ENCODE measurements at regions of chr19 and their contacts with region 1.

Region 1: GRCh38 chr19:35495107-35496064 is 5.1 kb upstream of the KRTDAP start:
- DNase-seq: no peak
- ATAC-seq: peak; percentile 98
- H3K4me3 ChIP-seq: no peak overlapping the region
- H3K27ac ChIP-seq: no peak overlapping the region
- H3K4me1 ChIP-seq: peaks cover 9% of the 10 kb centered on the region
- H3K27me3 ChIP-seq: peaks cover 0 to 2% of the 10 kb centered on the region in 2 experiments; a peak in 1 of 4 replicates
- CTCF ChIP-seq: peak; percentile 96 to 100 (median 98)
- EP300 ChIP-seq: no peak
- POLR2A ChIP-seq: no peak
- RAD21 ChIP-seq: peak; percentile 88

Region 2: GRCh38 chr19:35228177-35228930 is 267.0 kb before region 1 on chr19 and contains the start of gene FAM187B:
- CTCF ChIA-PET with region 1: no interaction called
- POLR2A ChIA-PET with region 1: no interaction called
- RAD21 ChIA-PET with region 1: no interaction called
- SMC1A ChIA-PET with region 1: no interaction called
- in situ Hi-C with region 1: no loop called
- intact Hi-C with region 1: no loop called
- DNase-seq: no peak
- ATAC-seq: no peak
- H3K4me3 ChIP-seq: no peak within 1 kb of the TSS
- H3K27ac ChIP-seq: no peak within 1 kb of the TSS
- H3K4me1 ChIP-seq: no peaks in the 10 kb centered on the region
- H3K27me3 ChIP-seq: 0 out of 4 replicates have a peak, but pooled peaks cover 0 to 2% of the 10 kb centered on the region in 2 experiments
- CTCF ChIP-seq: no peak
- EP300 ChIP-seq: no peak
- POLR2A ChIP-seq: no peak
- RAD21 ChIP-seq: no peak
- polyA plus RNA-seq, gene FAM187B: not detected

Region 3: DNA sequence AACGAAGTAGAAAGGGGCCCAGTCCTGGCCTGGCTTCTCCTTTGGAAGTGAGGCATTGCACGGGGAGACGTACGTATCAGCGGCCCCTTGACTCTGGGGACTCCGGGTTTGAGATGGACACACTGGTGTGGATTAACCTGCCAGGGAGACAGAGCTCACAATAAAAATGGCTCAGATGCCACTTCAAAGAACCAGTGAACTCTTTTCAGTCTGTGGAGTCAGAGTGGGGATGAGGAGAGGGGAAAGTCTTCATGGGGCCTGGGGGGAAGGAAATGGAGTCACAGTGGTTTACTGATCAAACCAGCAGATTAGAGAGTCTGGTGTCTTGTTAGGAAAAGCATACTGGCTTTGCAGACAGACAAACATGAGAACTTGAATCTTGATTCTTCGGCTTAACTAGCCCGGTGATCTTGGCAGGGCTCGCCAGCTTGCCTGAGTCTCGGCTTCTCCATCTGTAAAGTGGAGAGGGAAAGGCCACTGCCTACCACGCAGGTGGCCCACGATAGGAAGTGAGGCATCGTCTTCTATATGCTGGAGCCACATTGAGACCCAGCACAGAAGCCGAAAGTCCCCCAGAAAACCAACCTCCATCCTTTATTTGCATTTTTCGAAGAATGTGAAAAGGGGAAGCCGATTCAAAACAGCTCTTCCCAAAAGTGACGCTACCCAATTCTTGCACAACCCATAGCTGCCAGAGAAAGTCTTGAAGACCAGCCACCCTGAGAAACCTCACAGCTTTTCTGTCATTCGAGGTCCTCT is 148.0 kb before region 1 on chr19 and contains the start of gene FFAR1:
- CTCF ChIA-PET with region 1: interaction called, 111 read pairs
- POLR2A ChIA-PET with region 1: interaction called, 11 read pairs
- RAD21 ChIA-PET with region 1: interaction called, 41 read pairs
- SMC1A ChIA-PET with region 1: interaction called, 44 read pairs
- in situ Hi-C with region 1: no loop called
- intact Hi-C with region 1: loop called (anchors 1 kb)
- DNase-seq: peak; percentile 96
- ATAC-seq: peak; percentile 74
- H3K4me3 ChIP-seq: no peak within 1 kb of the TSS; the same call in 1 of the 2 replicates
- H3K27ac ChIP-seq: peak within 1 kb of the TSS; percentile 97
- H3K4me1 ChIP-seq: peaks cover 56% of the 10 kb centered on the region
- H3K27me3 ChIP-seq: no peaks in the 10 kb centered on the region
- CTCF ChIP-seq: no peak
- EP300 ChIP-seq: peak in 1 of 2 experiments; percentile 66; a peak in 2 of 4 replicates
- POLR2A ChIP-seq: peak; percentile 72
- RAD21 ChIP-seq: no peak
- polyA plus RNA-seq, gene FFAR1: 0.05 to 0.07 TPM

Region 4: GRCh38 chr19:35375505-35376307 is 119.7 kb before region 1 on chr19:
- CTCF ChIA-PET with region 1: interaction called, 10 read pairs
- POLR2A ChIA-PET with region 1: no interaction called
- RAD21 ChIA-PET with region 1: interaction called, 4 read pairs
- SMC1A ChIA-PET with region 1: interaction called, 3 read pairs
- in situ Hi-C with region 1: no loop called
- intact Hi-C with region 1: no loop called
- DNase-seq: no peak
- ATAC-seq: peak; percentile 36; the same call in 2 of the 3 replicates
- H3K4me3 ChIP-seq: no peak overlapping the region
- H3K27ac ChIP-seq: peak overlapping the region; percentile 51; the same call in 1 of the 2 replicates
- H3K4me1 ChIP-seq: peaks cover 31% of the 10 kb centered on the region
- H3K27me3 ChIP-seq: no peaks in the 10 kb centered on the region
- CTCF ChIP-seq: no peak
- EP300 ChIP-seq: no peak
- POLR2A ChIP-seq: no peak
- RAD21 ChIP-seq: no peak

Region 5: GRCh38 chr19:35462476-35462953 is 32.9 kb before region 1 on chr19:
- CTCF ChIA-PET with region 1: interaction called, 56 read pairs
- POLR2A ChIA-PET with region 1: interaction called, 4 read pairs
- RAD21 ChIA-PET with region 1: interaction called, 13 read pairs
- SMC1A ChIA-PET with region 1: interaction called, 29 read pairs
- in situ Hi-C with region 1: no loop called
- intact Hi-C with region 1: no loop called
- DNase-seq: peak; percentile 96
- ATAC-seq: peak; percentile 79
- H3K4me3 ChIP-seq: peak overlapping the region; percentile 33; the same call in 1 of the 2 replicates
- H3K27ac ChIP-seq: peak overlapping the region; percentile 73
- H3K4me1 ChIP-seq: peaks cover 56% of the 10 kb centered on the region
- H3K27me3 ChIP-seq: no peaks in the 10 kb centered on the region
- CTCF ChIP-seq: peak in 1 of 3 experiments; percentile 42; a peak in 2 of 6 replicates
- EP300 ChIP-seq: peak; percentile 92 to 97
- POLR2A ChIP-seq: no peak
- RAD21 ChIP-seq: peak; percentile 65

Region 6: GRCh38 chr19:35476149-35476548 is 19.2 kb before region 1 on chr19:
- CTCF ChIA-PET with region 1: interaction called, 56 read pairs
- POLR2A ChIA-PET with region 1: interaction called, 3 read pairs
- RAD21 ChIA-PET with region 1: interaction called, 10 read pairs
- SMC1A ChIA-PET with region 1: interaction called, 8 read pairs
- in situ Hi-C with region 1: no loop called
- intact Hi-C with region 1: no loop called
- DNase-seq: no peak
- ATAC-seq: no peak
- H3K4me3 ChIP-seq: no peak overlapping the region
- H3K27ac ChIP-seq: no peak overlapping the region
- H3K4me1 ChIP-seq: no peaks in the 10 kb centered on the region
- H3K27me3 ChIP-seq: no peaks in the 10 kb centered on the region
- CTCF ChIP-seq: peak in 2 of 3 experiments; percentile 30 to 32; a peak in 3 of 6 replicates
- EP300 ChIP-seq: no peak
- POLR2A ChIP-seq: no peak
- RAD21 ChIP-seq: no peak

Region 7: GRCh38 chr19:35509861-35510625 is 14.7 kb after region 1 on chr19:
- CTCF ChIA-PET with region 1: interaction called, 87 read pairs
- POLR2A ChIA-PET with region 1: interaction called, 9 read pairs
- RAD21 ChIA-PET with region 1: interaction called, 16 read pairs
- SMC1A ChIA-PET with region 1: interaction called, 35 read pairs
- in situ Hi-C with region 1: no loop called
- intact Hi-C with region 1: no loop called
- DNase-seq: no peak
- ATAC-seq: peak; percentile 88
- H3K4me3 ChIP-seq: peak overlapping the region; percentile 74
- H3K27ac ChIP-seq: peak overlapping the region; percentile 52
- H3K4me1 ChIP-seq: peaks cover 8% of the 10 kb centered on the region
- H3K27me3 ChIP-seq: no peaks in the 10 kb centered on the region; a peak in 1 of 4 replicates
- CTCF ChIP-seq: peak; percentile 96; a peak in 5 of 6 replicates
- EP300 ChIP-seq: no peak
- POLR2A ChIP-seq: no peak; the same call in 1 of the 2 replicates
- RAD21 ChIP-seq: peak; percentile 71

Region 8: GRCh38 chr19:35533201-35533821 is 37.9 kb after region 1 on chr19 and contains the start of gene GAPDHS:
- CTCF ChIA-PET with region 1: no interaction called
- POLR2A ChIA-PET with region 1: no interaction called
- RAD21 ChIA-PET with region 1: no interaction called
- SMC1A ChIA-PET with region 1: no interaction called
- in situ Hi-C with region 1: no loop called
- intact Hi-C with region 1: no loop called
- DNase-seq: no peak
- ATAC-seq: no peak
- H3K4me3 ChIP-seq: no peak within 1 kb of the TSS
- H3K27ac ChIP-seq: no peak within 1 kb of the TSS
- H3K4me1 ChIP-seq: peaks cover 7% of the 10 kb centered on the region
- H3K27me3 ChIP-seq: peaks cover 0 to 11% of the 10 kb centered on the region in 2 experiments; a peak in 3 of 4 replicates
- CTCF ChIP-seq: no peak
- EP300 ChIP-seq: no peak
- POLR2A ChIP-seq: no peak
- RAD21 ChIP-seq: no peak
- polyA plus RNA-seq, gene GAPDHS: not detected